Activated T-helper 1 cell treated with anti-CD3 and anti-CD28 coated beads, Interleukin-12 subunit alpha, Interleukin-12 subunit beta, Interleukin-2, Interleukin-4 antibody, amounts not matched to agents 30 ng/mL and 10 ng/mL and 1 ng/mL, durations not matched to agents 14 hours and 24 hours and 36 hours (primary cell): ENCODE measurements at regions of chrX and their contacts with region 1.

Region 1: GRCh38 chrX:103686199-103687072 is at the start of gene MORF4L2:
- DNase-seq: peak; percentile 85
- H3K4me3 Mint-ChIP-seq: peak within 1 kb of the TSS; percentile 90
- H3K27ac Mint-ChIP-seq: peak within 1 kb of the TSS; percentile 90
- H3K4me1 Mint-ChIP-seq: peaks cover 11% of the 10 kb centered on the region
- H3K27me3 Mint-ChIP-seq: no peaks in the 10 kb centered on the region
- total RNA-seq, gene MORF4L2: 225 and 229 TPM in 2 replicates

Region 2: DNA sequence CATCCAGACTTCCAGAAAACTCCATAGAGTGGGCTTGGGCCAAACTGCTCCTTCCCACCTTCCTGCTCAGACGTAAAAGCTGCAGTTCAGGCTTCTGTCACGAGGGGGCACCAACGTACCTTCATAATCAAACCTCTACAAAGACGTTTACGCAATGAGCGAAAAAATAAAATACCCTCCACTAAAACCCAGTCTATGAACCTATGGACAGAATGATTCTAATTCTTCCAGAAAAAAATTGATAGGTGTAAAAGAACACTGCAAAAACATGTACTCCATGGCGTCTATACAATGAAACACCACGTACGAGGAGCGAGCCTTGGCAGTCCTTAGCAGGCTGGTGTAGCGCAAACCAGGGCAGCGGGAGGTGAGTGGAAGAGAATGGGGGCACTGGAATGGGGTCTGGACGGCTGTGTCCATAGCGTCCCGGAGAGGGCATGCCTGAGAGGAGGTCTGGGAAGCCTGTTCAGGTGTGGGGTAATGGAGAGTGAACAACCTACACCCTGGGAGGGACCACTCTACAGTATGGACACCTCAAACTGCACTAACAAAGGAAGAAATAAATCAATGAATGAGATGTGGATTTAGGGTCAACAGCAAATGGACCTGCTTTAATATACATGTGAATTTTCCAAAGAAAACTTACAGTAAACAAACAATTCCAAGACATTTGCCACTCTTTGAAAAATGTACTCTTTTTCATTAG is 152.8 kb before region 1 on chrX:
- intact Hi-C with region 1: loop called (anchors 1 kb)
- DNase-seq: peak; percentile 33
- H3K4me3 Mint-ChIP-seq: peak overlapping the region; percentile 74
- H3K27ac Mint-ChIP-seq: no peak overlapping the region
- H3K4me1 Mint-ChIP-seq: peaks cover 6% of the 10 kb centered on the region
- H3K27me3 Mint-ChIP-seq: peaks cover 6% of the 10 kb centered on the region

Region 3: GRCh38 chrX:103614992-103615391 is 71.4 kb before region 1 on chrX:
- intact Hi-C with region 1: no loop called
- DNase-seq: no peak
- H3K4me3 Mint-ChIP-seq: no peak overlapping the region
- H3K27ac Mint-ChIP-seq: no peak overlapping the region
- H3K4me1 Mint-ChIP-seq: no peaks in the 10 kb centered on the region
- H3K27me3 Mint-ChIP-seq: peaks cover 2% of the 10 kb centered on the region

Region 4: DNA sequence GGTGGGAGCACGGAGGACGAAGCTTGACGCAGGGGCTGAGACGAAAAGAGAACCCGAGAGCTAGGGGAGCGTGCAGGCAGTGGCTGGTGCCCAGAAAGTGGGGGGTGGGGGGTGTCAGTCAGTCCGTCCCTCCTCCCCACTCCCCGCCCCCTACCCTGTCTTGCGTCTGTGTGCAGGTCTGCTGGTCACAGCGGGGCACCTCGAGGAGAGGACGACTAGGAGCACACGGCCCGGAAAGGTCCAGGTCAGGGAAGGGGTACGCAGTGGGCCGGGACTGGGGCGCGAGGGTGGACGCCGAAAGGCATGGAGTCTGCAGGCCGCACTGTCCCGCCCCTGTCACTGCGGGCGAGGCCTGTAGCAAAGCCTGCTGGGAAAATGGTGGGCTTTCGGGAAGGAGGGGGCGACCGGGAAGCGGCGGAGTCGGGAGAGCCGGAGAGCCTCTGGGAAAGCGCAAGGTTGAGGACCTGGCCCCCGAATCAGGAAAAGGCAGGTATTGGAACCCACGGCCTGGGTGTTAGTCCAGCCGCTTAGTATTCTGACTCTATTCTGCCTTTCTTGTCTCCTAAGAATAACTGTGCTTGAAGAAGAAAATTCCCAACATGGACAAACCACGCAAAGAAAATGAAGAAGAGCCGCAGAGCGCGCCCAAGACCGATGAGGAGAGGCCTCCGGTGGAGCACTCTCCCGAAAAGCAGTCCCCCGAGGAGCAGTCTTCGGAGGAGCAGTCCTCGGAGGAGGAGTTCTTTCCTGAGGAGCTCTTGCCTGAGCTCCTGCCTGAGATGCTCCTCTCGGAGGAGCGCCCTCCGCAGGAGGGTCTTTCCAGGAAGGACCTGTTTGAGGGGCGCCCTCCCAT is 56.9 kb before region 1 on chrX:
- intact Hi-C with region 1: loop called (anchors 5 kb)
- DNase-seq: no peak
- H3K4me3 Mint-ChIP-seq: peak overlapping the region; percentile 85
- H3K27ac Mint-ChIP-seq: peak overlapping the region; percentile 34
- H3K4me1 Mint-ChIP-seq: peaks cover 16% of the 10 kb centered on the region
- H3K27me3 Mint-ChIP-seq: no peaks in the 10 kb centered on the region

Region 5: GRCh38 chrX:103817502-103817901 is 131.1 kb after region 1 on chrX:
- intact Hi-C with region 1: loop called (anchors 1 kb)
- DNase-seq: no peak
- H3K4me3 Mint-ChIP-seq: no peak overlapping the region
- H3K27ac Mint-ChIP-seq: no peak overlapping the region
- H3K4me1 Mint-ChIP-seq: no peaks in the 10 kb centered on the region
- H3K27me3 Mint-ChIP-seq: peaks cover 19% of the 10 kb centered on the region

Region 6: GRCh38 chrX:104165894-104166737 is 479.7 kb after region 1 on chrX and contains the start of gene FAM199X:
- intact Hi-C with region 1: loop called (anchors 5 kb)
- DNase-seq: peak; percentile 81
- H3K4me3 Mint-ChIP-seq: peak within 1 kb of the TSS; percentile 85
- H3K27ac Mint-ChIP-seq: peak within 1 kb of the TSS; percentile 85
- H3K4me1 Mint-ChIP-seq: peaks cover 37% of the 10 kb centered on the region
- H3K27me3 Mint-ChIP-seq: no peaks in the 10 kb centered on the region
- total RNA-seq, gene FAM199X: 10.8 and 12.7 TPM in 2 replicates